Activated naive CD4-positive, alpha-beta T cell treated with anti-CD3 and anti-CD28 coated beads for 36 hours (primary cell): ENCODE measurements at regions of chr19 and their contacts with region 1.

Region 1: GRCh38 chr19:10580979-10581631 is 6.0 kb downstream of the AP1M2 start:
- DNase-seq: peak; percentile 97
- H3K4me3 Mint-ChIP-seq: no peak overlapping the region
- H3K27ac Mint-ChIP-seq: no peak overlapping the region
- H3K4me1 Mint-ChIP-seq: peaks cover 6% of the 10 kb centered on the region
- H3K27me3 Mint-ChIP-seq: no peaks in the 10 kb centered on the region

Region 2: DNA sequence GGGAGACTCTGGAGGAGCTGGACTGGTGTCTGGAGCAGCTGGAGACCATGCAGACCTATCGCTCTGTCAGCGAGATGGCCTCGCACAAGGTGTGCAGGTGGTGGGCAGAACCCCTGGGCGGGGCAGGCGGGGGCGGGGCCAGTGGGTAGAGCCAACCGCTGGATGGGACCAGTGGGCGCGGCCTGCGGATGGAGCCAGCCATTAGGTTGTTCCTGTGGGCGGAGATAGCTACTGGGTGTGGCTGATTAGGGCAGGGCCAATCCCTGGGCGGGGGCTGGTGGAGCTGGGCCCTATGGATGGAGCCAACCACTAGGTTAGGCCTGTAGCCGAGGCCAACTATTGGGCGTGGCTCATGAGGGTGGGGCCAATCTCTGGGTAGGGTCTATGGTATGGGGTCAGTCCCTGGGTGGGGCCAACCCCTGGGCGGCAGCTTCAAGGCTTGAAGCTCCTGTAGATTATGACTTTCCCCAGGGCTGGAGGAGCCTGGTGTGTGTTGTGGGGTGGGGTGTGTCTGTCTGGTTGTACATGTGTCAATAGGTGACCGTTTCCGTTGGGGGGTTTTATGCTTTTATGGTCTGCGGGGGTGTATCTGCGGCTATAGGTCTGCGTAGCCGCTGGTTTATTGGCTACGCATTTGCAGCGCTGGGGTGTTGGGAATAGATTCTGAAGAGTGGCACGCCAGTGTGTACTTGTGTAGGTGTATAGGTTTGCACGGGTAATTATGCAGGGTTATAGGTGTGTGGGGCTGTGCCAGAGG is 130.1 kb before region 1 on chr19:
- CTCF ChIA-PET with region 1: no interaction called
- intact Hi-C with region 1: no loop called
- DNase-seq: no peak
- H3K4me3 Mint-ChIP-seq: no peak overlapping the region
- H3K27ac Mint-ChIP-seq: no peak overlapping the region
- H3K4me1 Mint-ChIP-seq: no peaks in the 10 kb centered on the region
- H3K27me3 Mint-ChIP-seq: peaks cover 7% of the 10 kb centered on the region

Region 3: DNA sequence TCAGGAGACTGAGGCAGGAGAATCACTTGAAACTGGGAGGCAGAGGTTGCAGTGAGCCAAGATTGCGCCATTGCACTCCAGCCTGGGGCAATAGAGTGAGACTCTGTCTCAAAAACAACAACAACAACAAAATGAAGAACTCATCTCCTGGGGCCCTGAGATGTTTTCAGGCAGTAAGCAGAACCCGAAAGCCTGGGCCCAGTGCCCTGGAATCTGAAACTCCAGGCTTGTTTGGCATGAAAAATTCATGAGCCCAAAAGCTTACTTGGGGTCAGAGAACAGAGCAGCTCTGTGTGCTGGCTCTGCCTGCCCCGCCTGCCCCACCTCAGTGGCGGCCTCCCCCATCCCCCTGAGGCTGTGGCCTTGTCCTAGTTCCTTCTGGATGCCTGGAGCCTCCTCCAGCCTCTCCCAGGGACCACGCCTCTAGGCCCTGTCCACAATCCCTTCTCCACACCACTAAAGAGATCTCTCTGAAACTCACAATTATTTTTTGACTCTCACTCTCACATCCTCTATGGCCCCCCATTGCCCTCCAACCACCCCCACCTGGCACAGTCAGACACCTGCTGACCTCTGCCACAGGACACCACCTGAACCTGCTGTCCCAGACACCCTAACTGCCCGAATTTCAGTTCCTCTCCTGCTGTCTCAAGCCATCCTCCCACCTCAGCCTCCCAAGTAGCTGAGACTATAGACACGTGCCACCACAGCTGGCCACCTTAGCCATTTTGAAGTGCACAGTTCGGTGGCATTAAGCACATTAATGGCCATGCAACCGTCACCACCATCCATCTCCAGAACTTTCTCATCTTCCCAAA is 12.9 kb after region 1 on chr19:
- CTCF ChIA-PET with region 1: interaction called, 20 read pairs
- intact Hi-C with region 1: no loop called
- DNase-seq: no peak
- H3K4me3 Mint-ChIP-seq: no peak overlapping the region
- H3K27ac Mint-ChIP-seq: no peak overlapping the region
- H3K4me1 Mint-ChIP-seq: peaks cover 14% of the 10 kb centered on the region
- H3K27me3 Mint-ChIP-seq: no peaks in the 10 kb centered on the region

Region 4: DNA sequence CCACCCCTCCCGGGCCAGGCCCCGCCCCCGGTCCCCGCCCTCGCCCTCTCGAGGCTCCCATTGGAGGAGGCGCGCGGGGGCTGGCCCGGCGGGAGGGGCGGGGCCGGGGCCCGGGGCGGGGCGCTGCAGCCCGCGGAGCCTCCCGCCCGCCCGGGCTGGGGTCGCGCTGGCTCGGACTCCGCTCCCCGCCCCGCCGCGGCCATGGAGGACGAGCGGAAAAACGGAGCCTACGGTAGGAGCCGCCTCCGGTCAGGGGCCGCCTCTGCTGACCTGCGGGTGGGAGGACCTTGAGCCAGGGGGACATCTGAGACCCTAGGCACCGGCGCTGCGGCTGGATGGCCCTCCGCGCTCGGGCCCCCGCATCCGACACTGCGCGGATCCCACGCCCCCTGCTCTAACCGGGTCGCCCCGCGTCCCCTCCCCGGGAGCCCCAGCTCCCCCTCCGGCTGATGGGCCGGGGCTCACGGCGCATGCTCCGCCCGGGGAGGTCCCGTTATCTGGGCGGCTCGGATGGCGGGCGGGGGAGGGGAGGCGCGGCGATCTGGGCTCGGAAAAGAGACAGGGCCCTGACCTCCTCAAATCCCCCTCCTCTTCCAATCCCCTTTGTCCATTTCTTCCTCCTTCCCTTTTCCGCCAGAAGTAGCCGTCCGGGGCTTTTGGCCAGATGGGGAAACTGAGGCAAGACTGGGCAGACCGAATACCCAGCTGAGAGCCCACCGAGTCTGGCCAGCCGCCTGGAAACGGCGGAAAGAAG is 21.4 kb after region 1 on chr19:
- CTCF ChIA-PET with region 1: interaction called, 10 read pairs
- intact Hi-C with region 1: no loop called
- DNase-seq: peak; percentile 91
- H3K4me3 Mint-ChIP-seq: peak overlapping the region; percentile 98
- H3K27ac Mint-ChIP-seq: peak overlapping the region; percentile 100
- H3K4me1 Mint-ChIP-seq: peaks cover 24% of the 10 kb centered on the region
- H3K27me3 Mint-ChIP-seq: no peaks in the 10 kb centered on the region

Region 5: DNA sequence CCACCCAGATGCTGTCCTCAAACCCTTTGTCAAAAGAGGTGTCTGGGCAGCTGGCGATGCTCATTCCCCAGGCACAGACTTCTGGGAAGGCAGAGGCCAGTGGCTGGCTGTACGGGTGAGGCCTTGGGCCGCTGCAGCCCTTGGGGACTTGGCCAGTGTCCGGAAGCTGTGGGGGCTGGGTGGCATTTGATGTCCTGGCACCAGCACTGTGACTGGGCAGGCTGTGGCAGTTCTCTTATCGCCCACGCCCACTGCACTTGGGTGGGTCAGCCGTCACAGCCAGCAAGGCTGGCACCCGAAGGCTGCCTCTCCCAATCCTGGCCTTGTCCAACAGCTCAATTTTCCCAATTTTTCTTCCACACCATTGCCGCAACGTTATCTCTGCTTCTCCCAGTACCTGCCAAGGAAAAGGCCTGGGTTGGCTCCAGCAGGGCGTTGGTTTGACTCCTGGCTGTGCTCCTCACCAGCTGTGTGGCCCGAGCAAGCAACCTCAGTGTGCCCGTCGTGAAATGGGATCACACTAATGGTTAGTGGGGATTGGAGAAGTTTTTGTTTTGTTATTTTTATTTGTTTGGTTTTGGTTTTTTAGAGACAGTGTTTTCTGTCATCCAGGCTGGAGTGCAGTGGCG is 31.5 kb after region 1 on chr19:
- CTCF ChIA-PET with region 1: interaction called, 22 read pairs
- intact Hi-C with region 1: no loop called
- DNase-seq: no peak
- H3K4me3 Mint-ChIP-seq: no peak overlapping the region
- H3K27ac Mint-ChIP-seq: no peak overlapping the region
- H3K4me1 Mint-ChIP-seq: peaks cover 31% of the 10 kb centered on the region
- H3K27me3 Mint-ChIP-seq: no peaks in the 10 kb centered on the region

Region 6: DNA sequence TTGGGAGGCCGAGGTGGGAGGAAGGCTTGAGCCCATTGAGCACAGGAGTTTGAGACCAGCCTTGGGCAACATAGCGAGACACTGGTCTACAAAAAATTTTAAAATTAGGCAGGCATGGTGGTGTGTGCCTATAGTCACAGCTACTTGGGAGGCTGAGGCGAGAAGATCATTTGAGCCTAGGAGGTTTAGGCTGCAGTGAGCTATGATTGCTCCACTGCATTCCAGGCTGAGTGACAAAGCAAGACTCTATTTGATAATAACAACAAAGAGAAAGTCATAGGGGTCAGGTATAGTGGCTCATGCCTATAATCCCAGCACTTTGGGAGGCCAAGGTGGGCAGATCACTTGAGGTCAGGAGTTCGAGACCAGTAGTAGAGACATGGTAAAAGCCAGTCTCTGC is 39.7 kb after region 1 on chr19:
- CTCF ChIA-PET with region 1: interaction called, 22 read pairs
- intact Hi-C with region 1: no loop called
- DNase-seq: no peak
- H3K4me3 Mint-ChIP-seq: no peak overlapping the region
- H3K27ac Mint-ChIP-seq: peak overlapping the region; percentile 34
- H3K4me1 Mint-ChIP-seq: peaks cover 46% of the 10 kb centered on the region
- H3K27me3 Mint-ChIP-seq: no peaks in the 10 kb centered on the region

Region 7: GRCh38 chr19:10644260-10645007 is 63.3 kb after region 1 on chr19:
- CTCF ChIA-PET with region 1: interaction called, 251 read pairs
- intact Hi-C with region 1: loop called (anchors 1 kb)
- DNase-seq: peak; percentile 90
- H3K4me3 Mint-ChIP-seq: no peak overlapping the region
- H3K27ac Mint-ChIP-seq: no peak overlapping the region
- H3K4me1 Mint-ChIP-seq: peaks cover 16% of the 10 kb centered on the region
- H3K27me3 Mint-ChIP-seq: no peaks in the 10 kb centered on the region